SK-N-SH (cell line): ENCODE measurements at regions of chr3 and their contacts with region 1.

Region 1: DNA sequence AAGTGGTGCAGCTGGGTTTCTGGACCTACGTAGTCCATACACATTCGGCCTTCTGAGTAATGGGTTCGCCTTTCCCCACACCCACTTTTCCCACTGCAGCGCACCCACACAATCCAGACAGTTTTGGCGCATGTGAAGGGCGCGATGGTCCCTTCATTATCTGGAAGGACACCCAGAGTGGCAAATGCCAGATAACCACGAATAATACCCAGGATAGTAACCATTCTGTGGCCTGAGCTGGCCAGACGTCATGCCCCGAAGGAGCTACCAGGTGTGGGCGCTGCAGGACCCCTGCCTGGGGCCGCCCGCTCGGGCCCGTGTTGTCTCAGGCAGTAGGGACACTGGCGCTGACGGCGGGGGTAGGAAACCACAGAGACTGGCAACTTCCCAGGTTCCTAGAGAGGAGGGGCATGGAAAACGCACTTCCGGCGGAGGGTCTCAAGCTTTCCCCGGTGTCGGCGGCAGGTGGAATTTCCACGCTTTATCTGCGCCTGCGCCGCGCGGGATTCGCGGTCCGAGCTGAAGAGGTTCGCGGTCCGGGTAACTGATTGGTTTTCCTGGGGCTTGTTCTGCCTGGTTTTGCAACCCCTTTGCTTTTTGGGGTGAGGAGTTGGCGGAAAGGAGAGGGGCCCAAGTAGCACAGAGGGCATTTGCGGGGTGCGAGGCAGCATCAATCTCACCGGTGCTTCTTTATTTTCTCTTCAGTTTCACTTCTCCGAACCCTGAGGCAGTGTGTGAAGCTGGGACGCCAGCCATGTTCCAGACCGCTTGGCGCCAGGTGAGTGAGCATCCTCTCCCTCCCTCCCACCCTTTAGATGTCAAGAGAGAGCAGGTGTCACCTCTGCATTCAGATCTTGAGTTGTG is at the start of gene ZNF620:
- DNase-seq: peak; percentile 93
- H3K4me3 ChIP-seq: peak within 1 kb of the TSS; percentile 67 to 71
- H3K27ac ChIP-seq: peak within 1 kb of the TSS; percentile 79 to 82
- H3K4me1 ChIP-seq: peaks cover 2 to 8% of the 10 kb centered on the region in 2 experiments
- H3K27me3 ChIP-seq: no peaks in the 10 kb centered on the region
- CTCF ChIP-seq: peak; percentile 47
- EP300 ChIP-seq: no peak
- RAD21 ChIP-seq: peak; percentile 18; the same call in 1 of the 2 replicates
- polyA plus RNA-seq, gene ZNF620: 2.0 and 2.5 TPM in 2 replicates

Region 2: DNA sequence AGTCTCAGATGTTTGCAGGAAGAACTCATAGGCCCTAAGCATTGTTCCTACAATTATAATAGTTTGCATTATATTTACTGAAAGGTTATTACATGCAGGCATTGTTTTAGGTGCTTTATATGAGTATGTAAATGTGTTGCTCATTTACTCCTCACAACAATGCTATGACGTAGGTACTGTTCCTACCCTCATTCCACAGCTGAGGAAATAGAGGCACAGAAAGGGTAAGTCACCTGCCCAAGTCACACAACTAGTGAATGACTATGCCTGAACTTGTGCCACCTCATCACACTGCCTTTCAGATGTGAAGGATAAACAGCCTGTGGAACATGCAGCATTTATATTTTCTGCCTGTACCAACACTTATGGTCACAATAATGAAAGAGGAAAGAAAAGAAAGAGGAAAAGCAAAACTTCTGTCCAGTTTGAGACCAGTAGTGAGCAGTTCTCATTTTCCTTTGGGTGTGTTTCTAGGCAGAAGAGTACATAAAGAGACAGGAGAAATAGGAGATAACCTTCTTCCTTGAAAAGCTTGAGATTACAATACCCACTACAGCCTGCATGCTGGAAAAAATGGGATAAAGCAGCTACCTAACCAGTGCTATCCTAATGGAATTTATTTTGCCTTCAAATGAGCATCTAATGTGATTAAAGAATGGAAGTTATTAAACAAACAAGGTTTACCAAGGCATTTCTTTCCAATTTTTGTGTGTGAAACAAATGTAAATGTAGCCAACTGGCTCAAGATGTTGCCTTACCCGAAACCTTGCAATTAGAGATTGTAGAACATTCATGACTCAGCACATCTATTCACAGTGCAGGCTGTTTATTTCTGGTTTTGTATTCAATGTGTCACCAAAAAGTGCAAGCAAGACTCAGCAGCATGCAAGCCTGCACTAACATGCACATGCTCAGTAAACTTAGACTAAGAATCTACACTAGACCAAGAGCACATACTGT is 139.3 kb before region 1 on chr3:
- CTCF ChIA-PET with region 1: no interaction called
- POLR2A ChIA-PET with region 1: no interaction called
- DNase-seq: no peak
- H3K4me3 ChIP-seq: no peak overlapping the region
- H3K27ac ChIP-seq: no peak overlapping the region
- H3K4me1 ChIP-seq: no peaks in the 10 kb centered on the region
- H3K27me3 ChIP-seq: no peaks in the 10 kb centered on the region
- CTCF ChIP-seq: no peak
- EP300 ChIP-seq: no peak
- RAD21 ChIP-seq: no peak

Region 3: GRCh38 chr3:40452876-40453730 is 52.7 kb before region 1 on chr3:
- CTCF ChIA-PET with region 1: interaction called, 3 read pairs
- POLR2A ChIA-PET with region 1: interaction called, 12 read pairs
- DNase-seq: peak; percentile 94
- H3K4me3 ChIP-seq: peak overlapping the region; percentile 70 to 83
- H3K27ac ChIP-seq: peak overlapping the region; percentile 68 to 94
- H3K4me1 ChIP-seq: peaks cover 0 to 10% of the 10 kb centered on the region in 2 experiments; a peak in 2 of 4 replicates
- H3K27me3 ChIP-seq: no peaks in the 10 kb centered on the region
- CTCF ChIP-seq: no peak
- EP300 ChIP-seq: no peak
- RAD21 ChIP-seq: peak; percentile 56

Region 4: GRCh38 chr3:40476478-40477470 is 29.1 kb before region 1 on chr3 and contains the start of gene ZNF619:
- CTCF ChIA-PET with region 1: interaction called, 12 read pairs
- POLR2A ChIA-PET with region 1: interaction called, 19 read pairs
- DNase-seq: peak; percentile 86
- H3K4me3 ChIP-seq: peak within 1 kb of the TSS; percentile 81 to 95
- H3K27ac ChIP-seq: peak within 1 kb of the TSS; percentile 32 to 61; a peak in 2 of 4 replicates
- H3K4me1 ChIP-seq: peaks cover 4 to 6% of the 10 kb centered on the region in 2 experiments; a peak in 2 of 4 replicates
- H3K27me3 ChIP-seq: no peaks in the 10 kb centered on the region
- CTCF ChIP-seq: no peak
- EP300 ChIP-seq: no peak
- RAD21 ChIP-seq: no peak
- polyA plus RNA-seq, gene ZNF619: 1.6 and 2.4 TPM in 2 replicates

Region 5: GRCh38 chr3:40494698-40495097 is 11.1 kb before region 1 on chr3:
- CTCF ChIA-PET with region 1: interaction called, 14 read pairs
- POLR2A ChIA-PET with region 1: interaction called, 3 read pairs
- DNase-seq: no peak
- H3K4me3 ChIP-seq: no peak overlapping the region
- H3K27ac ChIP-seq: no peak overlapping the region
- H3K4me1 ChIP-seq: no peaks in the 10 kb centered on the region; a peak in 1 of 4 replicates
- H3K27me3 ChIP-seq: no peaks in the 10 kb centered on the region
- CTCF ChIP-seq: no peak
- EP300 ChIP-seq: no peak
- RAD21 ChIP-seq: no peak

Region 6: GRCh38 chr3:40524568-40525285 is 18.9 kb after region 1 on chr3 and contains the start of gene ZNF621:
- CTCF ChIA-PET with region 1: interaction called, 9 read pairs
- POLR2A ChIA-PET with region 1: interaction called, 45 read pairs
- DNase-seq: peak; percentile 98
- H3K4me3 ChIP-seq: peak within 1 kb of the TSS; percentile 83 to 87
- H3K27ac ChIP-seq: peak within 1 kb of the TSS; percentile 73 to 86
- H3K4me1 ChIP-seq: peaks cover 0 to 7% of the 10 kb centered on the region in 2 experiments; a peak in 1 of 4 replicates
- H3K27me3 ChIP-seq: no peaks in the 10 kb centered on the region
- CTCF ChIP-seq: no peak; the same call in 1 of the 2 replicates
- EP300 ChIP-seq: peak in 1 of 2 experiments; percentile 44; a peak in 1 of 4 replicates
- RAD21 ChIP-seq: no peak
- polyA plus RNA-seq, gene ZNF621: 10.3 and 15.5 TPM in 2 replicates